ENCODE measurements at regions of chr9 and their contacts with region 1.

Region 1: DNA sequence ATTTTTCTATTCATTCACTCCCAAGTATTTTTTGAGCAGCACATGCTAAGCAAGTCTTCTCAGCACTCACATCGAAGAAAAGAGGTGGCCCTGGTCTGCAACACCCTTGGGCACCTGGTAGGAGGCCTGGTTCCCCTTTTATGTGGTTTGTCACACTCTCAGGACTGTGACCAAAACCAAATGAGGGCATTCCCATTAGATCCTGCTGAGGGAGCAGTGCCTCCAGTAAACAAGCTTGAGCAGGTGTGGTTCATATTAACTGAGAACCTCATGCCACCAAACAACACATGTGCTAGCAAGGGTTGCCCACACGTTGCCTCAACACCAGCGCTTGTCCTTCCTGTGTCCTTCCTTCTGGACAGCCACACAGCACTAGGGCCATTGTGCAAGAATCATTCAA is 26.9 kb upstream of the SYK start:
- DNase-seq: no peak

Region 2: GRCh38 chr9:92170848-92171247 is 1396.2 kb after region 1 on chr9:
- intact Hi-C with region 1: loop called in 1 of 2 experiments (anchors 5 kb)
- DNase-seq: no peak